MCF 10A (cell line): ENCODE measurements at regions of chr13 and their contacts with region 1.

Region 1: GRCh38 chr13:48155848-48156247 is 60.9 kb upstream of the MED4 start:
- DNase-seq: peak; percentile 89
- H3K4me3 Mint-ChIP-seq: peak overlapping the region; percentile 23
- H3K27ac Mint-ChIP-seq: peak overlapping the region; percentile 78
- H3K4me1 Mint-ChIP-seq: peaks cover 43% of the 10 kb centered on the region
- H3K27me3 Mint-ChIP-seq: no peaks in the 10 kb centered on the region
- CTCF ChIP-seq: no peak

Region 2: DNA sequence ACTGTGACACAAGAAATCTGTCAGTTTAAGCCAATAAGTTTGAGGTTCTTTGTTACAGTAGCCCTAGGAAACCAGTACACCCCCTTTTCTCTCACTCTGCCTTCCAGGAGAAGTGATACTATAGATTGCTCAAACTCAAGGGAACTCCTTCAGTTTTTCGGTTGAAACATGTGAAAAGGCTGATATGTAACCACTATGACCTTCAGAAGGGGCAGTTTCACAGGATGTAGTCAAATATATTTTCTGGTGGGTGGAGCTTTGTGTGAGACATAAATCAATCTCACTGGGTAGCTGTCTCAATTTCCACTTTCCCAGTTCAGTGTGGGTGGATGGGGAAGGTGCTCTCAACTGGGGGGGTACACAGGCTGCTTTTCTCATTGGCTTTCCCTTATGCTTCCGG is 1300.7 kb before region 1 on chr13:
- CTCF ChIA-PET with region 1: no interaction called
- POLR2A ChIA-PET with region 1: no interaction called
- intact Hi-C with region 1: no loop called
- DNase-seq: no peak
- H3K4me3 Mint-ChIP-seq: no peak overlapping the region
- H3K27ac Mint-ChIP-seq: no peak overlapping the region
- H3K4me1 Mint-ChIP-seq: no peaks in the 10 kb centered on the region
- H3K27me3 Mint-ChIP-seq: peaks cover 19% of the 10 kb centered on the region
- CTCF ChIP-seq: no peak

Region 3: DNA sequence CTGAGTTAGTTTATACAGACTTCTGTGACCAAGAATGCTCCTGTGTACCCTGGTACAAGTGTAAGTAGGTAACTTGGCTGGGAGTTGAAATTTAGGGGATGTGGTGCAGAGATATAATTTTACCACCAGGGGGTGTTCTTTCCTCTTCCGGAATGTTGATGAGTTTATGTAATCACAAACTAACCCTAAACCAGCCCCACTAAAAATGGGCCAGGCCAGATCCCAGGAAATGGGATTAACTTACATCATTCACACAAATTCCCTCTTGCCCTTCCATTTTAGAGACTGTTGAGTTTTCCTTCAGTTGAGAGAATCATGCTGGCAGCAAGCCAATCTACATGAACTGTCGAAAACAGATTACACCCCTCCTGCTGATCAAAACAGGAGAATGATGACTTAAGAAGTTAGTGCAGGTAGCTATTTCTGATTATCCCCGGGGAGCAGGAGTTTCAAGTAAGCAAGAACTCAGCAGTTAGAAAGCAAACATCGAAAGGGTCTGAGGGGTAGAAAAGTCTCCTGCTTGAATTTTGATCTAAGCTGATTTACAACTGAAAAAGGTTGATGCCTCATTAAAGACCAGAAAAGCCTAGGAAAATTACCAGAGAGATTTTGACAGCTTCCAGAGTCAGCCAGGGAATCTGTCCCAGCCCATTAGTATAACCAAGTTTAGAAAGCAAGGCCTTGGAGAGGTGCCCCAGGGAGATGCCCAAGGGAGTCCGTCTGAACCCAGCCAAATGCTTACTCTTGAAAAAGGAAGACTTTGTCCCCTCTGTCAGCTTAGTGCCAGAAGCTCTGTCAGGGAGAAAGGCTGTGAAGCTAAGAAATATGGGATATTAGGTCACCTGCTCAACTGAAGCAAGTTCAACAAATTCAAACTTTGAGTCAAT is 28.7 kb before region 1 on chr13:
- CTCF ChIA-PET with region 1: interaction called, 3 read pairs
- POLR2A ChIA-PET with region 1: interaction called, 54 read pairs
- intact Hi-C with region 1: no loop called
- DNase-seq: peak; percentile 82
- H3K4me3 Mint-ChIP-seq: no peak overlapping the region
- H3K27ac Mint-ChIP-seq: peak overlapping the region; percentile 64
- H3K4me1 Mint-ChIP-seq: peaks cover 21% of the 10 kb centered on the region
- H3K27me3 Mint-ChIP-seq: no peaks in the 10 kb centered on the region
- CTCF ChIP-seq: peak; percentile 64

Region 4: DNA sequence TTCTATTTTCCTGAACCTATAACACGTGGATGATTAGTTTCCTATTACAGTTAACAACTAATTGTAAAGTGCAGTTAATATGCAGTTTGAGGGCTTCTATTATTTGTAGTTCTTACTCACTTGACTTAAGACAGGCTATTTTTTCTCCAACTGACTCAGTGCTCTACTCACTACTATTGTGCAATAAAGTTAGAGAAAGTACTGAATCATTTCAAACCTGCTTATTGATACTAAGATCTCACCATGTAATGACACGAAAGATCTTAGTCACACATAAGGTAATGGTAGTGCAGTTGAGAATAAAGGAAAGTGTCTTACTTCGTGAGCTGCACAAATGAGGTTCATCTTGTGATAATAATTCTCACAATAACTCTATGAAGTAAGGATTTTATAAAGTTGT is 54.3 kb after region 1 on chr13:
- CTCF ChIA-PET with region 1: no interaction called
- POLR2A ChIA-PET with region 1: interaction called, 3 read pairs
- intact Hi-C with region 1: loop called (anchors 5 kb)
- DNase-seq: peak; percentile 90
- H3K4me3 Mint-ChIP-seq: peak overlapping the region; percentile 54
- H3K27ac Mint-ChIP-seq: peak overlapping the region; percentile 53
- H3K4me1 Mint-ChIP-seq: peaks cover 9% of the 10 kb centered on the region
- H3K27me3 Mint-ChIP-seq: no peaks in the 10 kb centered on the region
- CTCF ChIP-seq: no peak